ENCODE measurements at regions of chr14 and their contacts with region 1.

Region 1: GRCh38 chr14:68506021-68506644 is 286.7 kb downstream of the ZFP36L1 start:
- DNase-seq: peak; percentile 71
- ATAC-seq: peak; percentile 72
- H3K4me3 ChIP-seq: no peak overlapping the region
- H3K27ac ChIP-seq: peak overlapping the region; percentile 68
- H3K4me1 ChIP-seq: peaks cover 20% of the 10 kb centered on the region
- H3K27me3 ChIP-seq: no peaks in the 10 kb centered on the region
- CTCF ChIP-seq: no peak

Region 2: DNA sequence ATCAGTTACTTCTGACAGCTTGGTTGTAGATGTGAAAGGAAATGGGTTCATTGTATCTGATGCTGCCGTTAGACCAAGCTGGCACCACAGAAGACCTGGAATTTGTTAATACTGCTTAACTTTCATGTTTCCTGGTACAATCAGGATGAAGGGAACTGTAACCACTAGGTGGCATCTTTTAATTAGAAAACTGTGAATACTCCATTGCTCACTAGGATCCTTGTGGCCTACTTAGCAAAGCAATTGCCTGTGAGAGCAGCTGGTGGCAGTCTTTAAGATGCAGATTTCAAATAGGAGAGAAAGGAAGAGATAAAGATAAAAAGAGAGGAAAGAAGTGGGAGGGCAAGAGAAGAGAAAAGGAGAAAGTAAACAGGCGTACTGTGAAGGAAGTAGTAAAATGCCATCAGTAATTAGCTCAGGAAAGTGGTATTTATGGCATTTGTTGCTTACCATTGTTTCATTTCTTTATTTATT is 572.1 kb before region 1 on chr14:
- CTCF ChIA-PET with region 1: no interaction called
- POLR2A ChIA-PET with region 1: no interaction called
- intact Hi-C with region 1: loop called (anchors 2 kb)
- DNase-seq: peak; percentile 88
- ATAC-seq: peak; percentile 99
- H3K4me3 ChIP-seq: no peak overlapping the region
- H3K27ac ChIP-seq: no peak overlapping the region
- H3K4me1 ChIP-seq: no peaks in the 10 kb centered on the region
- H3K27me3 ChIP-seq: no peaks in the 10 kb centered on the region
- CTCF ChIP-seq: peak; percentile 96

Region 3: DNA sequence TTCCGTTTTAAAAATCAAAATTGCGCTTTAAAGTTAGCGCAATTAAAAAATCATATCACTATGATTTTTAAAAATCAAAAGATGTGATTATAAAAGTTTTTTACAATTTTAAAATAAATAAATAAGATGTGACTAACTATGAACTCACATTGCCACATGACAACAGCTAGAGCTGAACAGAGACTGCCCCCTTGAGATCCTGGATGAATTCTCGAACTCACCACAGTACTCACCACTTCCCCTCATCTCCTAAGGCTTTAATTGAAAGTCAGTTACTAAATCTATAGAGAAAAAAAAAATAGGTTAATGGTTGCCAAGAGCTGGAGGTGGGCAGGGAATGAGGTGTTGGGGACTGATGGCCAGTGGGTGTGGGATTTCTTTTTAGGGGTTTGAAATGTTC is 97.5 kb before region 1 on chr14:
- CTCF ChIA-PET with region 1: interaction called, 3 read pairs
- POLR2A ChIA-PET with region 1: interaction called, 12 read pairs
- intact Hi-C with region 1: loop called (anchors 2 kb)
- DNase-seq: peak; percentile 63
- ATAC-seq: peak; percentile 59
- H3K4me3 ChIP-seq: no peak overlapping the region
- H3K27ac ChIP-seq: peak overlapping the region; percentile 22; the same call in 1 of the 2 replicates
- H3K4me1 ChIP-seq: peaks cover 56% of the 10 kb centered on the region
- H3K27me3 ChIP-seq: no peaks in the 10 kb centered on the region
- CTCF ChIP-seq: peak; percentile 63

Region 4: GRCh38 chr14:68466491-68467032 is 39.6 kb before region 1 on chr14:
- CTCF ChIA-PET with region 1: no interaction called
- POLR2A ChIA-PET with region 1: no interaction called
- intact Hi-C with region 1: loop called (anchors 2 kb)
- DNase-seq: peak; percentile 96
- ATAC-seq: peak; percentile 34
- H3K4me3 ChIP-seq: no peak overlapping the region; the same call in 1 of the 2 replicates
- H3K27ac ChIP-seq: peak overlapping the region; percentile 55
- H3K4me1 ChIP-seq: peaks cover 59% of the 10 kb centered on the region
- H3K27me3 ChIP-seq: no peaks in the 10 kb centered on the region
- CTCF ChIP-seq: no peak

Region 5: GRCh38 chr14:68598621-68599447 is 92.7 kb after region 1 on chr14:
- CTCF ChIA-PET with region 1: no interaction called
- POLR2A ChIA-PET with region 1: interaction called, 3 read pairs
- intact Hi-C with region 1: loop called (anchors 1 kb)
- DNase-seq: peak; percentile 97
- ATAC-seq: peak; percentile 92
- H3K4me3 ChIP-seq: peak overlapping the region; percentile 60
- H3K27ac ChIP-seq: peak overlapping the region; percentile 99
- H3K4me1 ChIP-seq: peaks cover 27% of the 10 kb centered on the region
- H3K27me3 ChIP-seq: no peaks in the 10 kb centered on the region
- CTCF ChIP-seq: no peak